HCT116 (cell line): ENCODE measurements at regions of chr2 and their contacts with region 1.

Region 1: DNA sequence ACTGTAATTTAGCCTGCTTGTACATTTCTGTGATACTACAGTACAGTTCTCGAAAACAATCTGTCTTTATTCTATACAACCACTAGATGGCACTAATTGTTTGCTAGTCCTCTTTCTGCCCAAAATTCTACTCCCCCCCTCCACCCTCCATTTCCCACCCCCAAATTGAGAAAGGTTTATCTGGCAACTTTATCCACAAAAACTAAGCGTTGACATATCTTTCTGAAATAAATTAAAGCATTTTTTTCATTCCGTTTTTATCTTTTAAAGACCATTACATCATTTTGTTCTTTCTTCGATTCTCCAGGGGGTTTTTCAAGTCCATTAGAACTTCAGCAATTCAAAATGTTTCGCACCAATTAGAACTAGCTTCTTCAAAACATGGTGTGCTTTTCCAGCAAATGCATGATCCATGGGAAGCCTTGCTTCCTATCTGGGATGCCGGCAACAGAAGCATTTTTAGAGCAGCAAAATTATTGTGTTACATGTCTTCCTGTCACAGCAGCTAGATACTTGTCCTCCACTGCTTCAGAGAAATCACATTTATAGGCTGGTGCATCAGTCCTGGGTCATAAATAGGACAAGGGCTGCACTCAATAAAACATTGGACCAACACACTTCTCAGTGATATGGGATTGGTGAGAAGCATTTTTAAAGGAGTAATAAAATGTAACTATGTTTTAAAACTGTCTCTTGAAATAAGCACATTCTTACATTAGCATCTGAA is 241.3 kb downstream of the PAX3 start:
- DNase-seq: no peak
- ATAC-seq: peak; percentile 59; the same call in 1 of the 2 replicates
- H3K4me3 ChIP-seq: no peak overlapping the region
- H3K27ac ChIP-seq: no peak overlapping the region
- H3K4me1 ChIP-seq: peaks cover 0 to 4% of the 10 kb centered on the region in 2 experiments; a peak in 1 of 4 replicates
- H3K27me3 ChIP-seq: peaks cover 50% of the 10 kb centered on the region
- CTCF ChIP-seq: peak; percentile 28 to 74 (median 45); a peak in 5 of 6 replicates
- POLR2A ChIP-seq: no peak
- RAD21 ChIP-seq: peak; percentile 68

Region 2: DNA sequence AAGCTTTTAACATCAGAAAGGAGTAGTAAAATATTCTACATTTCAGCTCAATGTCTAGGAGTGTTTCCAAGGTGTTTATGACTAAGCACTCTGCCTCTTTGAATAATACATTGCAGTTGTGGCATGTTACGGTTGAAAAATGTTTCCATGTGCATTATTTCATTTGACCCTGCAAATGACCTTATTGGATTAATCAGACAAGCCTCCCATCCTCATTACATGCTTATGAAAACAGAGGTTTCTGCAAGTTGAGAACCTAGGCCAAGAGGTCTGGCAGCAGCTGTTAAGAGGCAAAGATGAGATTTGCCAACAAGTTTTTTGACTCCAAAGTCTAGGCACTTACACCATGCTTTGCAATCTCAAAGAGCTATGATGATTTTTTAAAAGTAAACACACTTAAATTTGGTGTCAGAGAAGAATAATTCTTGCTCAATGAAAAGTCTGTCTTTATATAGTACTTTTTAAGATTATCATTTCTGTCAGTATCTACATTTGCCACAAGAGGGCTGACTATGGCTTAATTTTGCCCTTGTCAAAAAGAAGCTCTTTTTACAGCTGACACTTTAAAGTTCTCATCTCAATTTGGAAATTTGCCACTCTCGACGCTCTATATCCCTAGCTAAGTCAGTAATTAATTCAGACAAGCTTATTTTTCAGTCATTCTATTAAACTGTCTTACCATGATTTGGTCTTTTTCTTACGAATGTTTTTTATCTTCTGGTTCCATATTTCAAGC is 19.3 kb before region 1 on chr2:
- CTCF ChIA-PET with region 1: interaction called, 15 read pairs
- POLR2A ChIA-PET with region 1: no interaction called
- RAD21 ChIA-PET with region 1: no interaction called
- intact Hi-C with region 1: no loop called
- DNase-seq: no peak
- ATAC-seq: no peak
- H3K4me3 ChIP-seq: no peak overlapping the region
- H3K27ac ChIP-seq: no peak overlapping the region
- H3K4me1 ChIP-seq: no peaks in the 10 kb centered on the region
- H3K27me3 ChIP-seq: peaks cover 11% of the 10 kb centered on the region; the same call in 1 of the 2 replicates
- CTCF ChIP-seq: peak in 2 of 3 experiments; percentile 36 to 57; a peak in 3 of 6 replicates
- POLR2A ChIP-seq: no peak
- RAD21 ChIP-seq: peak; percentile 43

Region 3: DNA sequence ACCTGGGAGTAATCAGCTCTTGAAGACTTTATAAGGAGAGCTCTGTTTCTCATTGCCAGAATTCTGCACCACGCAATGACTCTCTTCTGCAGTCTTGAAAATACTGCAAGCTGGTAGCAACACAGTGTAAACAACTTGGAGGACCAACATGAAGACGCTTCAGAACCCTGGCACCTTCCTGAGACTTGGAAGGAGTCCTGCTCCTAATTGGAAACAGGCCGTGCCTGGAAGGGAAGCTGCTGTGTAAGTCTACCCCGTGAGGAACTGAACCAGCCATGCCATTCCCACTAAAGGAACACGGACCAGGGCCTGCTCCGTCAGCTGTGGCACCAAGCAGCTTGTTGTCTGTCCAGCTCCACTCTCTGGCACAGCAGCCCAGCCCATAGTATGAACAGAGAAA is 70.2 kb after region 1 on chr2:
- CTCF ChIA-PET with region 1: no interaction called
- POLR2A ChIA-PET with region 1: no interaction called
- RAD21 ChIA-PET with region 1: no interaction called
- intact Hi-C with region 1: no loop called
- DNase-seq: no peak
- ATAC-seq: no peak
- H3K4me3 ChIP-seq: no peak overlapping the region
- H3K27ac ChIP-seq: no peak overlapping the region
- H3K4me1 ChIP-seq: no peaks in the 10 kb centered on the region
- H3K27me3 ChIP-seq: peaks cover 29% of the 10 kb centered on the region
- CTCF ChIP-seq: no peak
- POLR2A ChIP-seq: no peak
- RAD21 ChIP-seq: no peak

Region 4: DNA sequence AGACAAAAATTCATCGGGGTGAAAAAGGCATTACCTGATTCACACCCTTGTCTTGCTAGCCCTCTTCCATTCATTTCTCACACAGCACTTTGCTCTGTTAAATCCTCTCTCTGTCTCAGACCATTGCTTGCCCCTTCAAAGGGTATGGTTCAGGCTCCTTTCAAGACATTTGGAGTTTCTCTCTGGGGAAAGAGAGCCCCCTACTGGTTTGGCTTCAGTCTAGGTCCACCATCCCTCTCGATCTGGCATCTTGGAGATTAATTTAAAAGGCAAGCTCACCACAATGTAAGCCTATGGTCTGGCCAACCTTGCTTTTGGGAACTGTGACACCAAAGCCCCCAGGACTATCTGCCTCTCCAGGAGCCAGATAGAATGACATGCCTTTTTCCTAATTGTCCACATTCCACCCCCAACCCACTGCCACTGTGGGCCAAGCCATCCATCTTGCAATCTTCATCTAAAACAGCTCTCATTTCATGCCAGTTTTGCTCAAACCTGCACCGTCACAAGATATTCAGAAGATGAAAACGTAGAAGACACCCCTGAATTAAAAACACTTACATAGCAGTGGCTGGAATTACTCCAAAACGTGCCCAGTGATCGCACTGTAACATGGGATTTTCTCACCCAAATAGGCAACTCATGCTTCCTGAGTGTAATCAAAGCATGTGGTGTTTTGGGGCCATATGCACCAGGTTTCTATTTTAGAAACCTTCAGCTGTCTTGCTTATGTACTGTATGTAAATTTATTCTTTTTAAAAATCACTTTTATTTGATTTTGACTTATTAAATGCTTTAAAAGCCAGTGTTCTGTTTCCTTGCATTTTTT is 504.5 kb after region 1 on chr2:
- CTCF ChIA-PET with region 1: interaction called, 10 read pairs
- POLR2A ChIA-PET with region 1: no interaction called
- RAD21 ChIA-PET with region 1: no interaction called
- intact Hi-C with region 1: loop called (anchors 5 kb)
- DNase-seq: peak; percentile 39
- ATAC-seq: peak; percentile 79
- H3K4me3 ChIP-seq: no peak overlapping the region
- H3K27ac ChIP-seq: no peak overlapping the region
- H3K4me1 ChIP-seq: no peaks in the 10 kb centered on the region
- H3K27me3 ChIP-seq: no peaks in the 10 kb centered on the region
- CTCF ChIP-seq: peak; percentile 55 to 69 (median 64); a peak in 5 of 6 replicates
- POLR2A ChIP-seq: no peak
- RAD21 ChIP-seq: peak; percentile 79

Region 5: DNA sequence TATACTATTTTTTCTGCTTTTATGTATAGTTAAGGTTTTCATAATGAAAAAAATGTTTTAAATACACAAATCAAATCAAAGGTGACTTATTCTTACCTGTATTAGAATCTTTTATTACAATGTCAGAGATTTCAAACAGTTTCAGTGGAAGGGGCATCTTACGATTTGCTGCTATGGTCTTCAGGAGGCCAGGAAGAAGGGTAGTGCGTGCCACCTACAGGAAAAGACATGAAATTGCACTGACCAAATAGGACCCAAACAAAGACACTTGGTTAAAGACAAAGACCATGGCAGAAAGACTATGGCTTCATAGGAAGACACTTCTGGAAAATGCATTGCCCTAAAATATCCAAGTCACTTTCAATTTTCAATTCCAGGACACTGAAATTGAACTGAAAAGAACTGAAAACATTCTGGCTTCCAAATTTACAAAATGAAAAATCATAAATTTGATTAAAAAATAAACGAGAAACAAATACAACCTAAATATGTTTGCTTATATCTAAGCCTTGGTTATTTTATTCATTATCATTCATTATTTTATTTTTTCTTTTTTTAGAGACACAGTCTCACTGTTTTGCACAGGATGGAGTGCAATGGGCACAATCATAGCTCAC is 556.3 kb after region 1 on chr2:
- CTCF ChIA-PET with region 1: no interaction called
- POLR2A ChIA-PET with region 1: no interaction called
- RAD21 ChIA-PET with region 1: no interaction called
- intact Hi-C with region 1: loop called (anchors 2 kb)
- DNase-seq: peak; percentile 15
- ATAC-seq: peak; percentile 92
- H3K4me3 ChIP-seq: no peak overlapping the region
- H3K27ac ChIP-seq: no peak overlapping the region
- H3K4me1 ChIP-seq: no peaks in the 10 kb centered on the region
- H3K27me3 ChIP-seq: no peaks in the 10 kb centered on the region
- CTCF ChIP-seq: peak; percentile 36 to 76 (median 68); a peak in 5 of 6 replicates
- POLR2A ChIP-seq: no peak
- RAD21 ChIP-seq: peak; percentile 67

Region 6: DNA sequence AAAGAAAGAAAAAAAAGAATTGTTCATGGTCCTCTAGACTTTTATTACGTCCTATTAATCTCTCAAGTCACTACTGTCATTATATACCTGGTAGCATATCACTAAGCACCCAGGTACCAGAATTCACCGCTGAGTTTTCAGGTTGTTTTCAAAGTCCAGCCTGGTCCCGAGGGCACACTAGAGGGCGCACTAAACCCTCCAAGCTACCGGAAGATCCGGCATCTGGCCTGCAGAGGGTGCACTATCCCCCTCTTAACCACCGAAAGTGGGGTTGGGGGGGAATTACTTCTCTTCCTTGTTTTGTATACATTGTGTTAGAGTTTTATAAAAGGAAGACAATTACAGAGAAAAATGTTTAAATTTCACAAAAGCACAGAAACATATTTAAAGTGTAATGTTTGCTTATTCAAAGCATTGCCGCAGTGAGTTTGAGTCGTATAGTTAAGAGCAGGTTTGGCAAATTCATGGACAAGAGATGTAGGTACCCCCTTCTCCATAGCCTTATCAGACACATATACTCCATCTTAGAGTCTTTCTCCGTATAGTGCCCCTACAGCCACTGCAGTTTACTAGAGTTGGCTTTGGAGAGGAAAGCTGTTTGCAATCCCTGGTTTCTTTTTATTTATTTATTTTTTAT is 633.2 kb after region 1 on chr2:
- CTCF ChIA-PET with region 1: no interaction called
- POLR2A ChIA-PET with region 1: no interaction called
- RAD21 ChIA-PET with region 1: no interaction called
- intact Hi-C with region 1: loop called (anchors 5 kb)
- DNase-seq: peak; percentile 77
- ATAC-seq: peak; percentile 93
- H3K4me3 ChIP-seq: no peak overlapping the region
- H3K27ac ChIP-seq: no peak overlapping the region
- H3K4me1 ChIP-seq: peaks cover 0 to 7% of the 10 kb centered on the region in 2 experiments; a peak in 2 of 4 replicates
- H3K27me3 ChIP-seq: no peaks in the 10 kb centered on the region
- CTCF ChIP-seq: peak; percentile 100
- POLR2A ChIP-seq: no peak
- RAD21 ChIP-seq: peak; percentile 82